Activated CD4-positive, alpha-beta T cell treated with anti-CD3 and anti-CD28 coated beads, Interleukin-2, amount 10 ng/mL, durations not matched to agents 24 days and 14 days (primary cell): ENCODE measurements at regions of chr12 and their contacts with region 1.

Region 1: GRCh38 chr12:14365294-14366208 is at the start of gene ATF7IP:
- DNase-seq: peak; percentile 99
- H3K4me3 Mint-ChIP-seq: peak within 1 kb of the TSS; percentile 82
- H3K27ac Mint-ChIP-seq: peak within 1 kb of the TSS; percentile 95
- H3K4me1 Mint-ChIP-seq: peaks cover 37% of the 10 kb centered on the region
- H3K27me3 Mint-ChIP-seq: no peaks in the 10 kb centered on the region
- total RNA-seq, gene ATF7IP: 62.6 and 72.4 TPM in 2 replicates

Region 2: DNA sequence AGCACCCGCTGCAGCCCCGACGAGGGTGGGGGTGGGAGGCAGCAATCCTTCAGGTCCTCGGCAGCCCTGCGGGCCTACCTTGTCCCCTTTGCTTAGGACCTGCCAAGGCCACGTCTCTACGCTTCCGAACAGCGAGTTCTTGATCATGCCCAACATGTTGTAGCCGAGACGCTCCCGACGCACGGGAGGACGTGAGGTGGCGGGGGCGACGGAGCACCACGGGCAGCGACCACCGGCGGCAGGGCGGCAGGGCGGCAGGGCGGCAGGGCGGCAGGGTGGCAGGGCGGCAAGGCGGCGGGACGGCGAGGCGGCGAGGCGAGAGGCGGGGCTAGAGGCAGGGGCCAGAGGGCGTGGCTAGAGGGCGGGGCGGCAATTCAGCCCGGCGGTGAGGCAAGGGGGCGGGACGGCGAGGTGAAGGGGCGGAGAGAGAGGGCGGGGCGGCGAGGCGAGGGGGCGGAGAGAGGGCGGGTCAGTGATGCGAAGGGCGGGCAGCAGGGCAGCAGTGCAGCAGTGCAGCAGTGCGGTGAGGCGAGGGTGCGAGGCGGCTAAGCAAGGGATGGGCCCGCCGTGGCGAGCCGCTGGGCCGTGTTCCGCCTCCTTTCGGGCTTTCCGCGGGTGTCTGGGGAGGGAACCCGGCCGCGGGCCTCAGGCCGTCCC is 1365.5 kb before region 1 on chr12 and contains the start of gene HEBP1:
- intact Hi-C with region 1: loop called (anchors 10 kb)
- DNase-seq: peak; percentile 98
- H3K4me3 Mint-ChIP-seq: peak within 1 kb of the TSS; percentile 91
- H3K27ac Mint-ChIP-seq: peak within 1 kb of the TSS; percentile 89
- H3K4me1 Mint-ChIP-seq: peaks cover 30% of the 10 kb centered on the region
- H3K27me3 Mint-ChIP-seq: peaks cover 25% of the 10 kb centered on the region
- total RNA-seq, gene HEBP1: 12.0 and 13.8 TPM in 2 replicates

Region 3: GRCh38 chr12:14239350-14239934 is 126.1 kb before region 1 on chr12:
- intact Hi-C with region 1: loop called (anchors 1 kb)
- DNase-seq: peak; percentile 74
- H3K4me3 Mint-ChIP-seq: peak overlapping the region; percentile 82
- H3K27ac Mint-ChIP-seq: peak overlapping the region; percentile 82
- H3K4me1 Mint-ChIP-seq: peaks cover 20% of the 10 kb centered on the region
- H3K27me3 Mint-ChIP-seq: no peaks in the 10 kb centered on the region

Region 4: GRCh38 chr12:14384783-14385638 is 19.5 kb after region 1 on chr12:
- intact Hi-C with region 1: loop called (anchors 1 kb)
- DNase-seq: peak; percentile 91
- H3K4me3 Mint-ChIP-seq: peak overlapping the region; percentile 77
- H3K27ac Mint-ChIP-seq: peak overlapping the region; percentile 84
- H3K4me1 Mint-ChIP-seq: peaks cover 44% of the 10 kb centered on the region
- H3K27me3 Mint-ChIP-seq: no peaks in the 10 kb centered on the region

Region 5: GRCh38 chr12:14417715-14418114 is 52.2 kb after region 1 on chr12:
- intact Hi-C with region 1: loop called (anchors 1 kb)
- DNase-seq: peak; percentile 90
- H3K4me3 Mint-ChIP-seq: peak overlapping the region; percentile 62
- H3K27ac Mint-ChIP-seq: peak overlapping the region; percentile 85
- H3K4me1 Mint-ChIP-seq: peaks cover 37% of the 10 kb centered on the region
- H3K27me3 Mint-ChIP-seq: no peaks in the 10 kb centered on the region

Region 6: DNA sequence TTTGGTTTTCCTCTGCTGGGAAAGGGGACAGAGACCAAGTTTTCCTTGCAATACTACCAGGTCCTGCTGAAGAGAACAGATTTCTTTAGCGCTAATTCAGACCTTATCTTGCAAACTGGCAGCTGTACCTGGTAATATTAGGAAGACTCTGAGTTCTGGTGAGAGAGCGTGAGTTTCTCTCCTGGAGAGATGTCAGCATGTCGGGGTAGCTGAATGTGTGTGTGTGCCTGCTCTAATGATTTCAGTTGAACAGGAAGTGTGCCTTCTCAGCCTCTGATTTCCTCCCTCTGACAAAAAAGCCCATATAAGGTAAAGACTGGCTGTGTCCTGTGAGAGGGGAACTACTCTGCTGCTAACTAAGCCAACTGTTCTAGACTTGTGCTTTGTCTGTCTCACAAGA is 583.1 kb after region 1 on chr12:
- intact Hi-C with region 1: loop called (anchors 2 kb)
- DNase-seq: peak; percentile 89
- H3K4me3 Mint-ChIP-seq: peak overlapping the region; percentile 79
- H3K27ac Mint-ChIP-seq: peak overlapping the region; percentile 95
- H3K4me1 Mint-ChIP-seq: peaks cover 74% of the 10 kb centered on the region
- H3K27me3 Mint-ChIP-seq: no peaks in the 10 kb centered on the region